Activated CD4-positive, alpha-beta memory T cell treated with anti-CD3 and anti-CD28 coated beads, Interleukin-2, amount 10 ng/mL, durations not matched to agents 7 days and 5 days (primary cell): ENCODE measurements at regions of chr9 and their contacts with region 1.

Region 1: GRCh38 chr9:127970401-127971313 is 10.1 kb downstream of the EEIG1 start:
- DNase-seq: peak; percentile 81
- H3K4me3 Mint-ChIP-seq: peak overlapping the region; percentile 74
- H3K27ac Mint-ChIP-seq: peak overlapping the region; percentile 93
- H3K4me1 Mint-ChIP-seq: peaks cover 95% of the 10 kb centered on the region
- H3K27me3 Mint-ChIP-seq: no peaks in the 10 kb centered on the region

Region 2: DNA sequence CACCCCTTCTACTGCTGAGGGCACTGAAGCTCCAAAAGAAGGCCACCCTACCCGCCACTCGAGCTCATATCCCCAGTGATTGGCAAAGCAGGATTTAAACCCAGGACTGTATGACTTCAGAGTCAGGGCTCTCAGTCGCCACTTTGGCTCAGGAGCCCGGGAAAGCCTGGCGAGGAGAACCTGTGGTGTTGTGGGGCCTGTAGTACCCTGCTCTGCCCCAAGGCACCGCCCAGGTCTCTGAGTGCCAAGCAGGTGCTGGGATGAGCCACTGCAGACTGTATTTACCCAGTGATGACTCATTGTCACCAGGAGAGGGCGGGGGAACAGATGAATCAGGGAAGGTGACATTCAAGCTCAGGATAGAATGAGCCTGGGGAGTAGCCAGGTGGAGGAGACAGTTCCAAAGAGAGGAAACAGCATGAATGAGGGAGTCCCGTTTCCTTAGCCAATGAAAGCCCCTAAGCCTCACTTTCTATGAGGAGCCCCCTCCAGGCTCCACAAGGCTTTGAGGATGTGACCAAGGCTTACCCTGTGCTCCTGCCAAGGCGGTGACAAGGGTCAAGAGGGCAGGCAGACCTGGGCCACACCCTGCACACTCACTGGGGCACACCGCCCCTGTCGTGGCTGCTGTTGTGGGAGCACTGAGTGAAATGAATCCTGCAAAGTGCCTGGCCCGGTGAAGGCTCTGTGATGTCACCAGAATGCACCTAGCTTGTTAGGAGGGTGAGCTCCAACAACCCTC is 15.2 kb before region 1 on chr9:
- CTCF ChIA-PET with region 1: interaction called, 44 read pairs
- POLR2A ChIA-PET with region 1: interaction called, 29 read pairs
- DNase-seq: peak; percentile 81
- H3K4me3 Mint-ChIP-seq: peak overlapping the region; percentile 31
- H3K27ac Mint-ChIP-seq: peak overlapping the region; percentile 66
- H3K4me1 Mint-ChIP-seq: peaks cover 72% of the 10 kb centered on the region
- H3K27me3 Mint-ChIP-seq: no peaks in the 10 kb centered on the region

Region 3: GRCh38 chr9:127960410-127961154 is 10.1 kb before region 1 on chr9:
- CTCF ChIA-PET with region 1: interaction called, 44 read pairs
- POLR2A ChIA-PET with region 1: interaction called, 29 read pairs
- DNase-seq: no peak
- H3K4me3 Mint-ChIP-seq: no peak overlapping the region
- H3K27ac Mint-ChIP-seq: no peak overlapping the region
- H3K4me1 Mint-ChIP-seq: peaks cover 81% of the 10 kb centered on the region
- H3K27me3 Mint-ChIP-seq: no peaks in the 10 kb centered on the region